Activated CD4-positive, alpha-beta T cell treated with anti-CD3 and anti-CD28 coated beads for 36 hours (primary cell): ENCODE measurements at regions of chr1 and their contacts with region 1.

Region 1: GRCh38 chr1:7042322-7043190 is 257.3 kb downstream of the CAMTA1 start:
- DNase-seq: no peak
- ATAC-seq: no peak
- H3K4me3 Mint-ChIP-seq: no peak overlapping the region
- H3K27ac Mint-ChIP-seq: no peak overlapping the region
- H3K4me1 Mint-ChIP-seq: no peaks in the 10 kb centered on the region
- H3K27me3 Mint-ChIP-seq: peaks cover 3% of the 10 kb centered on the region

Region 2: DNA sequence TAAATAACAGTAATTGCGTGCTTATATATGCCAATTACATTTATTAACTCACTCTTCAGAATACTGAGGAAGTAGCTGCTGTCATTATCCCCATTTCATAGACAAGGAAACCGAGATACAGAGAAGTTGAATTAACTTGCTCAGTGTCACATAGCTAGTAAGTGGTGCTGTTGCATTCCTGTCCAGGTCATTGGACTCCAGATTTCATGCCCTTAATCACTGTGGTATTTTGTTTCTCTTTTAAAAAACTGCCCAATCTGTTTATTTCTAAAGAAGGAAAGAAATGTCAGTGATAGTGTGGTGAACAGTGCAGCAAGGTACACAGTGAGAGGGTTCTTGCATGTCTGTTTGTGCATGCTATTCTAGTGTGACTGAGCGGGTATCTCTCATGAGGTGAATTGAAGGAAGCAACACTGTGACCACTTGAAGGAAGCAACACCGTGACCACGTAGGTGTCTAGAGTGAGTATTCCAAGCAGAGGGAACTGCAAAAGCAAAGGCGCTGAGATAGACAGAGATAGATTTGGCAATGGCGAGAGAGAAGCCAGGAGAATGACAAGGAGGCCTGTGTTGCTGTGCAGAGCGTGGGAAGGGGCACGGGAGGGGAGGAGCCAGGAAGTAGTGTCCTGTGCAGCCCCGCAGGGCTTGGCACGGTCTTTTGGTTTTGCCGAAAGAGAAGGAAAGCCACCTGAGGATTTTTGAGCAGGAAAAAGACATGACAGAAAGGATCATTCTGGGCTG is 161.4 kb before region 1 on chr1:
- CTCF ChIA-PET with region 1: no interaction called
- POLR2A ChIA-PET with region 1: no interaction called
- intact Hi-C with region 1: no loop called
- DNase-seq: no peak
- ATAC-seq: no peak
- H3K4me3 Mint-ChIP-seq: no peak overlapping the region
- H3K27ac Mint-ChIP-seq: no peak overlapping the region
- H3K4me1 Mint-ChIP-seq: peaks cover 7% of the 10 kb centered on the region
- H3K27me3 Mint-ChIP-seq: no peaks in the 10 kb centered on the region

Region 3: DNA sequence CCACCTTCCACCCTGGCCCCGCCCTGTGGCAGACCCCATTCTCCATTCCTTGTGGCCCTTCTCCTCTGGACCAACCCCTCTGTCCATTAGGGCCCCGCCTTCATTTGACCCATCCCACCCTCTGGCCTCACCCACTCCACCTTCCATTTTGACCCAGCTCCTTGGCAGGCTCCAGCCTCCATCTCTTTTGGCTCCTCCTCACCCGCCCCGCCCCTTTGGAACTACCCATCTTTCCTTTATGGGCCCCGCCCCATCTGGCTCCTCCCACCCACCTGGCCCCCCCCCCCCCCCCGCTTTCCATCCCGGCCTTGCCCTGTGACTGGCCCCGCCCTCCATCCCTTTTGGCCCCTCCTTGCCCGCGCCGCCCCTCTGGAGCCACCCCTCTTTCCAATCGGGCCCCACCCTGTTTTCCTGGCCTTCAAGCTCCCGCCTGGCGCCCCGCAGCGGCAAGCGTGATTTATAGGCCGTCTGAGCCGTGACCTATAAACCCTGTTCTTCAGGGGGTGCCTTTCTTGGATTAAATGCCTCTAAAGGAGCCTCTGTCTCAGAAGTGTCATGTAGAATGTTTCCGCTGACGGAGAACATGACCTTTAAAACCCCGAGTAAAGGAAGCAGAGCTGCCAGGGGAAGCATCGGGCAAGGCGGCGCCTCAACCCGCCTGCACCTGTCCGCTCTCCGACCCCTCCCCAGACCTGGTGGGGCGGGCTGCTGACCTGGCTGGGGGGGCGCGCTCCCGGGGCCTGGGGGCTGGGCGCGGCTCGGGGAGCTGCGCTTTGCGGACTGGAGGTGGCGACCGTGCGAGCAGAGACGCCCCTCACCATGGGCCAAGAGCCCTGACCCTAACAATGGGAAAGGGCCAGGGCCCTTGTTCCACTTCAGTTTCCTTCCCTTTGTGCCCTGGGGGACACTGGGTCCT is 79.3 kb before region 1 on chr1:
- CTCF ChIA-PET with region 1: no interaction called
- POLR2A ChIA-PET with region 1: no interaction called
- intact Hi-C with region 1: no loop called
- DNase-seq: peak; percentile 93
- ATAC-seq: peak; percentile 63
- H3K4me3 Mint-ChIP-seq: peak overlapping the region; percentile 69
- H3K27ac Mint-ChIP-seq: peak overlapping the region; percentile 85
- H3K4me1 Mint-ChIP-seq: peaks cover 22% of the 10 kb centered on the region
- H3K27me3 Mint-ChIP-seq: peaks cover 8% of the 10 kb centered on the region

Region 4: DNA sequence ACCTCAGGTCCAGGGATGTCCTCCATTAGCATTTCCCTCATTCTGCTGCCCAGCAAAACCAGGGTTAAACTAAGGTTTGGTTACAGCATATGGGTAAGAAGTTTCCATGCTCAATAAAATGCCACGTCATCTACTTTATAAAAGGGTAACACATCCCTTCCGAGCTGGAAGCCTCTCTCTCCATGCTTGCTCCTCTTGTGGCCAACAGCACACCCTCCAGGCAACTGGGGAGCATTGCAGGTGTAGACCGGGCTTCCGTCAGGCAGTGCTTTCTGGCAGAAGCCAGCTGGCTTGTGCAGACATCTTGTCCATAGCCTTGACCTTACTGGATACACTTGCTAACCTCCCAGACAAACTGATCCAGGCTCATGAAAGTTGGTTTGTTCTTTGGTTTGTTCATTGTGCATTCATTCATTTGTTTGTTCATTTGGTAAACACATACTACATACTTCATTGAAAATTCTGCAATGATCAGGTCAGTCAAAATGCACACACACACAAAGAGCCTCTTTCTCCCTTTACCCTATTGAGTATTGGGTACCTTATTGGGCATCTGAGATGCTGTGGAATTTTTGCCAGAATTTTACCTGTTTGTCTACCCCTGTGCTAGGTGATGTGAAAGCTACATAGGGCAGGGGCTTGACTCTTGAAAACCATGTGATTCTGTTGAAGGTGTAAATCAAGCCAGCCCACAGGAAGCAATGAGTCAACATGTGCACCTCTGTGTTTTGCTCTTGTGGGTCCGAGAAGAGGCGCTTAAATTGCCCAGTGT is 165.5 kb after region 1 on chr1:
- CTCF ChIA-PET with region 1: interaction called, 7 read pairs
- POLR2A ChIA-PET with region 1: no interaction called
- intact Hi-C with region 1: loop called (anchors 2 to 10 kb)
- DNase-seq: peak; percentile 70
- ATAC-seq: peak; percentile 72
- H3K4me3 Mint-ChIP-seq: no peak overlapping the region
- H3K27ac Mint-ChIP-seq: no peak overlapping the region
- H3K4me1 Mint-ChIP-seq: no peaks in the 10 kb centered on the region
- H3K27me3 Mint-ChIP-seq: peaks cover 36% of the 10 kb centered on the region

Region 5: GRCh38 chr1:7218210-7218832 is 175.8 kb after region 1 on chr1:
- CTCF ChIA-PET with region 1: interaction called, 4 read pairs
- POLR2A ChIA-PET with region 1: no interaction called
- intact Hi-C with region 1: loop called in 1 of 2 experiments (anchors 10 kb)
- DNase-seq: peak; percentile 52
- ATAC-seq: no peak
- H3K4me3 Mint-ChIP-seq: no peak overlapping the region
- H3K27ac Mint-ChIP-seq: no peak overlapping the region
- H3K4me1 Mint-ChIP-seq: no peaks in the 10 kb centered on the region
- H3K27me3 Mint-ChIP-seq: peaks cover 21% of the 10 kb centered on the region

Region 6: DNA sequence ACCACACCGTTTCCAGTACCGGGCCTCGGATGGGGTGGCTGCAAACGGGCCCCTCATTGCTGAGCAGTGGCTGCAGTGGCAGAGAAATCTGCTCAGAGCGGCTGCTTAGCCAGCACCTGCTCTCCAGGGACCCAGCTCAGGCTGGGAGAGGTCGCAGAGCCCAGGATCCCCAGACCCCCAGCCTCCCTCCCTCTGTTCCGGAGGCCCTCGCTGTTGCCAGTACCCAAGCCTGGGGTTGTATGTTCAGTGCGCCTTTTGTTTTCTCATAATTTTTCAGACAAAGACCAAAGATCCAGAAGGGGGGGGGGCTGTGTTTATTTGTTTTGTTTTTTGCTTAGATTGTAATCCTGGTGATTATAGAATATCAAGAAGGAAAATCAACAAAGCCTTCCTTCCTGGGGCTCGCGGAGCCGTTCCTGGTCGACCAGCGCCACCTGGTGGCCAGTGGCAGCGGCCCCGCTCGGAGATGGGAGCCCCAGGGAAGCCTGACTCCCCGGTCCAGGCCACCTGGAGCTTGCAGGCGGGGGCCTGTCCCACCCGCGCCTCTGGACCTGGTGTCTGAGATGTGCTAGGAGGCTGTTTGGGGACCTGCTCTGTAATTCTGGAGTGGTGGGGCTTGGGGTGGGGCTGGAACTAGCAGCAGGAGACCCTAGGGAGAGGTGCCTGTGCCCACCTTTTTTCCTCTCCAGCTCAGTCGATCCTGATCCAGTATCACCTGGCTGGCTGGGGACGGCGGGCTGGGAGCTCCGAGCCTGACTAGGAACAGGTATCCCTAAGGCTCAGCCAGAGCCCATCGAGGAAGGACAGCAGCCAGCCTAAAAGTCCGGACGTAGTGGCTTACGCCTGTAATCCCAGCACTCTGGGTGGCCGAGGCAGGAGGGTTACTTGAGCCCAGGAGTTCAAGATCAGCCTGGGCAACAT is 604.7 kb after region 1 on chr1:
- CTCF ChIA-PET with region 1: interaction called, 4 read pairs
- POLR2A ChIA-PET with region 1: no interaction called
- intact Hi-C with region 1: loop called (anchors 1 to 10 kb)
- DNase-seq: peak; percentile 85
- ATAC-seq: no peak
- H3K4me3 Mint-ChIP-seq: no peak overlapping the region
- H3K27ac Mint-ChIP-seq: no peak overlapping the region
- H3K4me1 Mint-ChIP-seq: no peaks in the 10 kb centered on the region
- H3K27me3 Mint-ChIP-seq: no peaks in the 10 kb centered on the region

Region 7: GRCh38 chr1:8040586-8040985 is 998.0 kb after region 1 on chr1:
- CTCF ChIA-PET with region 1: no interaction called
- POLR2A ChIA-PET with region 1: no interaction called
- intact Hi-C with region 1: no loop called
- DNase-seq: no peak
- ATAC-seq: no peak
- H3K4me3 Mint-ChIP-seq: no peak overlapping the region
- H3K27ac Mint-ChIP-seq: no peak overlapping the region
- H3K4me1 Mint-ChIP-seq: peaks cover 4% of the 10 kb centered on the region
- H3K27me3 Mint-ChIP-seq: peaks cover 4% of the 10 kb centered on the region